AG04449 (cell line): ENCODE measurements at regions of chr6 and their contacts with region 1.

Region 1: DNA sequence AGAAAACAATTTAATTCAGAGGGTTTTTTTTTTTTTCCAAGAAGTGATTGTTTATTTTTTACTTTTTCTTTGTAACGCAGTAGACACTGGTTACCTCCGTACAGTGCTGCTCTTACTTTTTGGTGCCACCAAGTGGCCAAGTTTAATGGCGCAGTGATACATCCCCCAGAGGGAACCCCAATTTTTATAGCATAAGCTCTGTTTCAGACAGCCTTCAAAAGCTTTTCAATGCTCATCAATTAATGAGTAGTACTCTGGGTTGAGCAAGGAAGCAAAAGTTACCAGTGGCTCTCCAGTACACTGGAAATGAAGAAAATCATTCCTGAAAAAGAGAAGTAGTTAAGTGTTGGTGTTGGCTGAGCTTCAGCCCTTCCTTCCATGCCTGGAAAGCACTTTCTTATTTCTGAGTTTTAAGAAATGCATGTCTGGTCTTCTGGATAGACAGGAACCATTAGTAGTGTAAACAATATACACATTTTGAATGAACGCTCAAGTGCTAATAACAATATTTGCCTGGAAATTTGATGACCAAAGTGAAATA is 129.1 kb upstream of the SMLR1 start:
- DNase-seq: no peak
- H3K4me3 ChIP-seq: no peak overlapping the region
- CTCF ChIP-seq: peak; percentile 69

Region 2: DNA sequence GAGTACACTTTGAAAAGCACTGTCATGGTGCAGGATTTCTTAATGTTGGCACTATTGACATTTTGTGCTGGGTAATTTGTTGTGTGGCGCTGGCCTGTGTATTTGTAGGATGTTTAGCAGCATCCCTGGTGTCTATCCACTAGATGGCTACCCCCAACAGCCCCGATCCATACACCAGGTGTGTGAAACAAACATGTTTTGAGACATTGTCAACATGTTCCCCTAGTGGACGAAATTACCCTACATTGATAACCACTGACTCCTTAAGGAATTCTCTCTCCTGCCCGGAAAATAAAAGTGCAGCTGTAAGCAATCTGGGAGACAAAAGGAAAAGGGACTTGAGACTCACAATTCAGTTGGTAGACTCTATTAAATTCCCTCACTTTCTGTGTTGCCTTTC is 384.9 kb before region 1 on chr6:
- CTCF ChIA-PET with region 1: interaction called, 13 read pairs
- POLR2A ChIA-PET with region 1: no interaction called
- DNase-seq: no peak
- H3K4me3 ChIP-seq: no peak overlapping the region
- CTCF ChIP-seq: no peak

Region 3: DNA sequence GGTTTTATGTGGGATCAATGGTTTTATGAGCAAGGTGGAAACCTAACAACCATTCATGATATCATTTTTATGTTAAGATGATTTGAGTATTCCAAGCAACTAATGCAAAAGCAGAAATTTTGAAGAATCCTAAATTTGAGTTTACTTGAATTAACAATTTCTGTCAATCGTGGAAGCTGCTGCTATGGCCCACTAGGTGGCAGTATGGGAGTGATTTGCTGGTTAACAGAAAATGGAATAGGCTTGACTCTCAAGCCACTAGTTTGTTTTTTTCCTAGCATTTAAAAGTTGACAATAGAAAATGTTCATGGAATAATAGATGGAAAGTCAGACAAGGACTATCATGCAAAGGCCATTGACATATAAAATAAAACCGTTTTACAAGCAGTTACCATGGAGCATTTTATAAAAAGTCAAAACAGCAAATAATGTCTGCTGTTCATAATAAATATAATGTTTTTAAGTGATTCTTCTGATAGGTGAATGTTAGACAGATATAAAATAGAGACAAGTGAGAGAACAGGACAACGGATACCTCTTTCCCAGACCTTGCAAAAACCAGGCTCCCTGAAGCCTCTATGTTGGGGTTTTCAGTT is 375.3 kb before region 1 on chr6:
- CTCF ChIA-PET with region 1: interaction called, 69 read pairs
- POLR2A ChIA-PET with region 1: no interaction called
- DNase-seq: peak; percentile 26
- H3K4me3 ChIP-seq: no peak overlapping the region
- CTCF ChIP-seq: peak; percentile 75

Region 4: GRCh38 chr6:130365166-130366106 is 332.6 kb before region 1 on chr6 and contains the start of gene TMEM200A:
- CTCF ChIA-PET with region 1: interaction called, 18 read pairs
- POLR2A ChIA-PET with region 1: no interaction called
- DNase-seq: no peak
- H3K4me3 ChIP-seq: peak within 1 kb of the TSS; percentile 92
- CTCF ChIP-seq: peak; percentile 90

Region 5: GRCh38 chr6:130683761-130684517 is 14.1 kb before region 1 on chr6:
- CTCF ChIA-PET with region 1: interaction called, 12 read pairs
- POLR2A ChIA-PET with region 1: no interaction called
- DNase-seq: no peak
- H3K4me3 ChIP-seq: no peak overlapping the region
- CTCF ChIP-seq: no peak

Region 6: GRCh38 chr6:130715058-130715457 is 17.0 kb after region 1 on chr6:
- CTCF ChIA-PET with region 1: interaction called, 10 read pairs
- POLR2A ChIA-PET with region 1: no interaction called
- DNase-seq: no peak
- H3K4me3 ChIP-seq: no peak overlapping the region
- CTCF ChIP-seq: no peak

Region 7: GRCh38 chr6:131116749-131117360 is 418.8 kb after region 1 on chr6:
- CTCF ChIA-PET with region 1: no interaction called
- POLR2A ChIA-PET with region 1: no interaction called
- DNase-seq: no peak
- H3K4me3 ChIP-seq: no peak overlapping the region
- CTCF ChIP-seq: no peak